Esophagus muscularis mucosa (tissue), 4 donors: ENCODE measurements at regions of chr22 and their contacts with region 1.

Region 1: DNA sequence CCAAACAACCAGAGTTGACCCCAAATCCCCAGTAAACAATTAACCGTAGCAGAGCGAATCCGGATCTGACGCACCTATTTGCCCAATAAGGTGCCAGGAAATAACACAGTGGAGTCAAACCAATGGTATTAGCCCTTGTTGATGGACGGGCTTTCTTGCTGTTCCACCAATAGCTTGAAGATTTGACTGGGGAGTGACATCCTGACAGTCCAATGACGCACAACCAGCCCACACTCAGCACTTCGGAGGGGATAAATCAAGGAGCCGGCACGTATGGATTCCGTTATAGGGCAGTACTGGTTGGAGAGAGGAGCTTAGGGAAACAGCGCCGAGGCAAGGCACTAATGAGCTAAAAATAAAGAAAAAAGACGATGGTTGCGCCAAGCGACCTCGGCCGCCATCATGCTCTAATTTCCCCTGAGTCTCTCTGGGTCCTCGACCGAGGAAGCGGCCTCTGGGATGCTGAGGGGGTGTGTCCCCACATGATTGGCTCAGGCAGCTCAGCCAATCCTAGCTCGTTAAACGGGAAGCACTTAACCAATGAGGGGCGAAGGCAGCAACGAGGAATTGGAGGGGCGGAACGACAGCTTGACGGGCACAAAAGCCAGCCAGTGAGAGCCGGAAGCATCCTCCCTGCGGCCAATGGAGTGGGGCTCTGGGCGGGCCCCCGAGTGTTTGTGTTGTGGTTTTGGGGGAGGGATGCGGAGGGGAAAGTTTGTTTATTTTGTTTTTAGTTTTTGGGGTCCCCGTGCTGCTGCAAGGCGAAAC is 49.5 kb downstream of the FAM83F start:
- DNase-seq: peak; percentile 100
- H3K4me3 ChIP-seq: peak overlapping the region; percentile 65 to 85 (median 81)
- H3K27ac ChIP-seq: peak overlapping the region; percentile 91 to 98 (median 94)
- H3K4me1 ChIP-seq: peaks cover 45 to 74% (median 64%) of the 10 kb centered on the region in 4 donors
- H3K27me3 ChIP-seq: no peaks in the 10 kb centered on the region
- CTCF ChIP-seq: peak in 1 of 3 experiments; percentile 20
- EP300 ChIP-seq: no peak
- POLR2A ChIP-seq: peak; percentile 28

Region 2: DNA sequence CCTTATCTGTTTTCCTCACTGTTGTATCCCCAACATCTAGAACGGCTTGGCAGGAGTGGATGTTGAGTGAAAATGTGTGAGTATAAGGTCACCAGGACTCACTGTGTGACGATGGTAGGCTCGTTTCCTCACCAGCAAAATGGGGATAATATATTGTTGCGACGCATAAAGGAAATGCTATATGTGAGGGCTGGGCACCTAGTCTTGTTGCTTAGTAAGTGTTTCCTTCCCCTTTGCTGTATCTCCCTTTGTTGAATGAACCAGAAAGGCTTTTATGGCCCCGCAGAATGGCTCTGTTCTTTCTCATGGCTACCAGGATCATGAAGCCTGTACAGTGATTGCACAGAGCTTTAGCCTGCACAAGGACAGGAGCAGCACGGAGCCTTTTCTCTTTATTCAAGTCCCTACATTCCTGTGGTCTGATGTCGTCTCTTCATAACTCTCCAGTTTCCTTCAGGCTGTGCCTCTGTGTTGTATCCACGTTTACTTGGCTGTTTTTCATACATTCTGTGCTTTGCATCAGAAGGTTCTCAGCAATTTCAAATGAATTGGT is 138.8 kb after region 1 on chr22:
- intact Hi-C with region 1: loop called (anchors 5 kb)
- DNase-seq: no peak
- H3K4me3 ChIP-seq: peak overlapping the region in 1 of 4 donors; percentile 8
- H3K27ac ChIP-seq: peak overlapping the region; percentile 57 to 83 (median 66)
- H3K4me1 ChIP-seq: peaks cover 58 to 86% (median 69%) of the 10 kb centered on the region in 4 donors
- H3K27me3 ChIP-seq: no peaks in the 10 kb centered on the region
- CTCF ChIP-seq: no peak
- EP300 ChIP-seq: no peak
- POLR2A ChIP-seq: no peak

Region 3: GRCh38 chr22:40346178-40347118 is 302.2 kb after region 1 on chr22 and contains the start of gene ADSL:
- intact Hi-C with region 1: loop called (anchors 2 kb)
- DNase-seq: peak; percentile 97
- H3K4me3 ChIP-seq: peak within 1 kb of the TSS; percentile 67 to 93 (median 81)
- H3K27ac ChIP-seq: peak within 1 kb of the TSS; percentile 86 to 90 (median 88)
- H3K4me1 ChIP-seq: peaks cover 20 to 32% (median 29%) of the 10 kb centered on the region in 4 donors
- H3K27me3 ChIP-seq: no peaks in the 10 kb centered on the region
- CTCF ChIP-seq: peak in 2 of 3 experiments; percentile 9 to 34
- EP300 ChIP-seq: no peak
- POLR2A ChIP-seq: peak; percentile 91
- total RNA-seq, gene ADSL: 58.7 to 91.1 (median 76.3) TPM